ENCODE measurements at regions of chr3 and their contacts with region 1.

Region 1: GRCh38 chr3:4350789-4351163 is 47.6 kb downstream of the SETMAR start:
- DNase-seq: peak in 2 of 5 donors; percentile 46 to 65
- H3K4me3 ChIP-seq: peak overlapping the region; percentile 32
- H3K27ac ChIP-seq: peak overlapping the region in 1 of 2 donors; percentile 62
- H3K4me1 ChIP-seq: peaks cover 9% of the 10 kb centered on the region
- H3K27me3 ChIP-seq: no peaks in the 10 kb centered on the region
- CTCF ChIP-seq: peak; percentile 69 to 87 (median 74)
- EP300 ChIP-seq: no peak
- POLR2A ChIP-seq: no peak

Region 2: GRCh38 chr3:4493014-4493940 is 142.5 kb after region 1 on chr3 and contains the start of gene ITPR1:
- intact Hi-C with region 1: loop called in 2 of 4 experiments (anchors 10 kb)
- DNase-seq: peak; percentile 98 to 99 (median 99)
- H3K4me3 ChIP-seq: peak within 1 kb of the TSS; percentile 94
- H3K27ac ChIP-seq: peak within 1 kb of the TSS; percentile 48 to 72
- H3K4me1 ChIP-seq: peaks cover 4% of the 10 kb centered on the region
- H3K27me3 ChIP-seq: no peaks in the 10 kb centered on the region
- CTCF ChIP-seq: peak in 1 of 3 donors; percentile 49
- EP300 ChIP-seq: no peak
- POLR2A ChIP-seq: peak; percentile 100
- total RNA-seq, gene ITPR1: 78.5 to 313 (median 146) TPM

Region 3: DNA sequence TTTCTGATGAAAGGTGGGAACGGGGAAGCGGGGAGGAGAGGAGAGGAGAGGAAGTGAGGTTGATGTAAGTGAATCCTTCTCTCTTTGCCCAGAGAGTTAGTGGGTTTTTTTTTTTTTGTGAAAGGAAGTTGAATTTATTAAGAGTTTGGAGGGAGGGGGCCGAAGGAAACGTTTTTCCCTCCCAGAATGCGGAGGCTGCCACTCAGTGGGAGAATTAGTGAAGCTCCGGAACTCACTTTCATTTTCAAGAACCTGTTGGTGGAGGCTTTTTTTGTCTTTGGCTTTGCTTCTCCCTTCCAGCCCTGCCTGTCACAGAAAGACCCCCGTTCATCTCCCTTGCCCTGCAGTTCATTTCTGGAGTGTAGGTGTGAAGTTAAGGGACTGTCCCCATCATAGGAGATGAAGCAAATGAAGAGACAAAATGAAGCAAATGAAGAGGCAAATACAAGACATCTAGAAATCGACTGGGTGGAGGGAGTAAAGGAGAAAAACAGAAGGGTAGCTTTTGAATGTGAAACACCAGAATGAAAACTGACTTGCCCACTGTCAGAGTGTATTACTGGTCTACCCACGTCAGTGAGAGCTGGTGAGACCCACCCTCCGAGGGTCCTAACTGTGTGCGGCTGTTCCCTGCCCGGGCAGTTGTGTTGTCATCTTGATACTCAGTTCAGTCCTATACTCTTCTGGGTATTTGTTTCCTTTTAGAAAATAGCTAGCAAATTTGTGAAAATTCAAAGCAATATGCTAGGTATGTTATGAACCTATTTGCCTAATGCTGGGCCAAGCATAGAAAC is 233.9 kb after region 1 on chr3:
- intact Hi-C with region 1: loop called in 2 of 4 experiments (anchors 5 to 10 kb)
- DNase-seq: peak; percentile 51 to 68 (median 57)
- H3K4me3 ChIP-seq: peak overlapping the region; percentile 31
- H3K27ac ChIP-seq: peak overlapping the region; percentile 5 to 85
- H3K4me1 ChIP-seq: peaks cover 28% of the 10 kb centered on the region
- H3K27me3 ChIP-seq: no peaks in the 10 kb centered on the region
- CTCF ChIP-seq: no peak
- EP300 ChIP-seq: no peak
- POLR2A ChIP-seq: no peak

Region 4: DNA sequence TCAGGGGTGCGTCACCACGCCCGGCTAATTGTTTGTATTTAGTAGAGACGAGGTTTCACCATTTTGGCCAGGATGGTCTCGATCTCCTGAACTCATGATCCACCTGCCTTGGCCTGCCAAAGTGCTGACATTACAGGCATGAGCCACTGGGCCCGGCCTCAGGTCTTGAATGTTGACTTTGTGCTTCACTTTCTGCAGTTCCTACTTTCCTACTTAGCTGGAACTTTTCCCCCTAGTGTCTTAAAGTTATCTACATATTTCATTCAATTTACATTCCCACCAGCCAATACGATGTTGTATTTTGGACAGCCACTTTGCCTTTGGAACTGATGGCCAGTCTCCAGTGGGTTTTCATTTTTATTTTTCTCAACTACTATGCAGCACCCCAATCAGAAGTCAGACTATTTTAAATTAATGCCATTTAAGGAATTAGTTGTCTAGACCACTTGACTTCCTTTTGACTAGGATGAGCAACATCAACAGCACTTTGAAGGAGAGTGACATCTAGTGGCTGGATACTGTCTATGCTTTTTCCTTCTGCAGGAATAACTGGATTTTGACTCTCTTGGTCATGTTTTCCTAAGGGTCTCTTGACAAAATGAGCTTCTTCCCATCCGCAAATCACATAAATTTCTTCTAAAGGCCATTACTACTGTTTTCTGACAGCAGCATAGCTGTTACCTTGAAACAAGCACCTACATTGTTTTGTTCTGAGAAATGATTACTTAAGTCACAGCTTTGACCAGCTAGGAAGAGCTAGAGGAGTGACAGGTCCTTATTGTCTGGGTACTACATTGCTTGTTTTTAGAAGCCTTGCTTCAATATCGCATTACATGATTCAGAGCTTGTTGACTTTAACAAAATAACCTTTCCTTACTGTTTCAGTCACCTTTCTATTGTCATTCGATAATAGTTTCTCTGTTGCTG is 282.6 kb after region 1 on chr3:
- intact Hi-C with region 1: loop called (anchors 5 to 10 kb)
- DNase-seq: no peak
- H3K4me3 ChIP-seq: no peak overlapping the region
- H3K27ac ChIP-seq: no peak overlapping the region
- H3K4me1 ChIP-seq: no peaks in the 10 kb centered on the region
- H3K27me3 ChIP-seq: no peaks in the 10 kb centered on the region
- CTCF ChIP-seq: peak; percentile 80 to 86 (median 83)
- EP300 ChIP-seq: no peak
- POLR2A ChIP-seq: no peak

Region 5: DNA sequence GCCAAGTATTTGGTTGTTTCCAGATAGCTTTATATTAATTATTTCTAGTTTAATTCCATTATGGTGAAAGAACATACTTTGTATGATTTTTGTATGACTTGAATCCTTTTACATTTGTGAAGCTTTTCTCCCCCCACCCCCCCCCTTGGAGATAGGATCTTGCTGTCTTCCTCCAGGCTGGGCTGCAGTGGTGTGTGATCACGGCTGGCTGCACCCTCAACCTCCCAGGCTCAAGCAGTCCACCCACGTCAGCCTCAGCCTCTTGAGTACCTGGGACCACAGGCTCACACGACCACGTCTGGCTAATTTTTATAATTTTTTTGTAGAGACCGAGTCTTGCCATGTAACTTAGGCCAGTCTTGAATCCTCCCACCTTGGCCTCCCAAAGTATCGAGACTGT is 800.8 kb after region 1 on chr3:
- intact Hi-C with region 1: no loop called
- DNase-seq: no peak
- H3K4me3 ChIP-seq: no peak overlapping the region
- H3K27ac ChIP-seq: no peak overlapping the region
- H3K4me1 ChIP-seq: peaks cover 3% of the 10 kb centered on the region
- H3K27me3 ChIP-seq: no peaks in the 10 kb centered on the region
- CTCF ChIP-seq: no peak
- EP300 ChIP-seq: no peak
- POLR2A ChIP-seq: no peak